K562 (cell line): ENCODE measurements at regions of chr14 and their contacts with region 1.

Region 1: DNA sequence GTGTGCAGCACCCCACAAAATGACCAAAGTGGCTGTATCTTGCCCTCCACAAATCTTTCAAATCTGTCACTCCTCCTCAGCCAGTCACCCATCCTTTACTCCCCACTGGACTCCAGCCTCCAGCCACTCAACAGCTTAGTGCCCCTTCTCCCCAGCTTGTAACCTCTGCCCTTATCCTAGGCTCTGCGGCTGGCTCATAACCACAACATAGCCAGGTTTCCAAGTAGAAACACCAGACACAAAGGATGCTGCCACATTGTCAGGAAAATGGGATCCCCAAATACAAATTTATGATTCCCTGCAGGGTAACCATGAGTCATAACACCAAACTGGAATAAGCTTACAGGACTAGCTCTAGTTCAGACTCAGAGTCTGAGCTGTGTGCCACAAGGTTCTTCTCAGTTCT is 15.1 kb downstream of the OXA1L start:
- DNase-seq: no peak
- ATAC-seq: no peak
- H3K4me3 ChIP-seq: no peak overlapping the region
- H3K27ac ChIP-seq: no peak overlapping the region
- H3K4me1 ChIP-seq: peaks cover 0 to 8% of the 10 kb centered on the region in 2 experiments; a peak in 3 of 5 replicates
- H3K27me3 ChIP-seq: no peaks in the 10 kb centered on the region
- CTCF ChIP-seq: no peak
- EP300 ChIP-seq: no peak
- POLR2A ChIP-seq: no peak
- RAD21 ChIP-seq: no peak

Region 2: GRCh38 chr14:22589096-22589839 is 192.3 kb before region 1 on chr14 and contains the start of gene DAD1:
- CTCF ChIA-PET with region 1: no interaction called
- POLR2A ChIA-PET with region 1: no interaction called
- in situ Hi-C with region 1: no loop called
- intact Hi-C with region 1: no loop called
- DNase-seq: peak; percentile 96 to 99 (median 97)
- ATAC-seq: peak; percentile 96
- H3K4me3 ChIP-seq: peak within 1 kb of the TSS; percentile 65
- H3K27ac ChIP-seq: peak within 1 kb of the TSS; percentile 87
- H3K4me1 ChIP-seq: peaks cover 9 to 30% of the 10 kb centered on the region in 2 experiments
- H3K27me3 ChIP-seq: no peaks in the 10 kb centered on the region
- CTCF ChIP-seq: no peak
- EP300 ChIP-seq: no peak; the same call in 1 of the 2 replicates
- POLR2A ChIP-seq: peak; percentile 91
- RAD21 ChIP-seq: 0 out of 4 replicates have a peak, but pooled peaks of 1 of the 2 experiments have one; percentile 6
- polyA plus RNA-seq, gene DAD1: 585 to 617 TPM

Region 3: GRCh38 chr14:22641846-22642245 is 139.7 kb before region 1 on chr14:
- CTCF ChIA-PET with region 1: no interaction called
- POLR2A ChIA-PET with region 1: no interaction called
- in situ Hi-C with region 1: no loop called
- intact Hi-C with region 1: no loop called
- DNase-seq: no peak
- ATAC-seq: no peak
- H3K4me3 ChIP-seq: no peak overlapping the region
- H3K27ac ChIP-seq: no peak overlapping the region
- H3K4me1 ChIP-seq: peaks cover 0 to 3% of the 10 kb centered on the region in 2 experiments; a peak in 3 of 5 replicates
- H3K27me3 ChIP-seq: no peaks in the 10 kb centered on the region
- CTCF ChIP-seq: no peak
- EP300 ChIP-seq: no peak
- POLR2A ChIP-seq: no peak
- RAD21 ChIP-seq: no peak

Region 4: GRCh38 chr14:22822571-22823098 is 41.0 kb after region 1 on chr14:
- CTCF ChIA-PET with region 1: interaction called, 6 read pairs
- POLR2A ChIA-PET with region 1: no interaction called
- in situ Hi-C with region 1: no loop called
- intact Hi-C with region 1: loop called (anchors 1 kb)
- DNase-seq: peak; percentile 77 to 87 (median 82)
- ATAC-seq: peak; percentile 88
- H3K4me3 ChIP-seq: no peak overlapping the region
- H3K27ac ChIP-seq: no peak overlapping the region
- H3K4me1 ChIP-seq: peaks cover 18 to 30% of the 10 kb centered on the region in 2 experiments; a peak in 4 of 5 replicates
- H3K27me3 ChIP-seq: no peaks in the 10 kb centered on the region
- CTCF ChIP-seq: peak; percentile 89 to 95 (median 91)
- EP300 ChIP-seq: 0 out of 2 replicates have a peak, but pooled peaks have one; percentile 5
- POLR2A ChIP-seq: no peak
- RAD21 ChIP-seq: peak; percentile 92 to 94

Region 5: DNA sequence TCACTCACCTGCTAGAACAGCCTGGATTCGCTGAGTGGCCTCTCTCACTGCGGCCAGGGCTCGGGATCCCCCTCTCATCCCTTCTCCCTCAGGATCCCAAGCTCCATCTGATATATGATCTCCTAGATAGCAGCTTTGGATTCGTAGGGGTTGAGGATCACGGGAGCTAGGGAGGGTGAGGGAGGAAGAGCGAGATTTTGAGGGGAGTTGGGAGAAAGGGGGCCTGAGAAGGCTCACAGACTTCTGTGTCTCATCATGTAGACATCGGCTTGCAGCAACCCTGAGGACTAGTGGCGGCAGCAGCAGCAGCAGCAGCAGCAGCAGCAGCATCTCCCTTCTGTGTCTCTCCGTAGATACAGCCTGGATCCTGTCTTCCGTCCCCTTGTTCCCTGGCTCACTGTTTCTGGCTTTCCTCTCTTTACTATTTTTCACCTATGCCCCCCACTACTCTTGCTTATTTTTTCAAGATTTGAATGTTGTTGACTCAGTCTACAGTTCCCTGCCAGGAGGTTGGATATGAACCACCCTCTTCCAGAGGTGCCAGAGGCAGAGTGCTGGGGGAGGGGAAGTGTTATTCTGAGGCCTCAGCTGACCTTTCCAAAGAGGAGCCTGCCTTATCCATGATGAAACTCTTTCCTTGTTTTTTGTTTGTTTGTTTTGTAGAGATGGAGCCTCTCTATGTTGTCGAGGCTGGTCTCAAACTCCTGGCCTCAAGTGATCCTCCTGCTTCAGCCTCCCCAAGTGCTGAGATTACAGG is 323.2 kb after region 1 on chr14 and contains the start of gene CIROP:
- CTCF ChIA-PET with region 1: no interaction called
- POLR2A ChIA-PET with region 1: no interaction called
- in situ Hi-C with region 1: no loop called
- intact Hi-C with region 1: no loop called
- DNase-seq: peak in 1 of 4 experiments; percentile 6
- ATAC-seq: no peak
- H3K4me3 ChIP-seq: no peak within 1 kb of the TSS
- H3K27ac ChIP-seq: no peak within 1 kb of the TSS
- H3K4me1 ChIP-seq: peaks cover 4 to 8% of the 10 kb centered on the region in 2 experiments; a peak in 4 of 5 replicates
- H3K27me3 ChIP-seq: no peaks in the 10 kb centered on the region
- CTCF ChIP-seq: no peak
- EP300 ChIP-seq: no peak
- POLR2A ChIP-seq: no peak
- RAD21 ChIP-seq: no peak
- polyA plus RNA-seq, gene CIROP: not detected